ENCODE measurements at regions of chr5 and their contacts with region 1.

Region 1: GRCh38 chr5:163347671-163348070 is 89.7 kb upstream of the CCNG1 start:
- DNase-seq: peak; percentile 88
- H3K4me3 Mint-ChIP-seq: no peak overlapping the region
- H3K27ac Mint-ChIP-seq: no peak overlapping the region
- H3K4me1 Mint-ChIP-seq: no peaks in the 10 kb centered on the region
- H3K27me3 Mint-ChIP-seq: peaks cover 26% of the 10 kb centered on the region
- CTCF ChIP-seq: peak; percentile 92

Region 2: GRCh38 chr5:161851691-161852299 is 1495.9 kb before region 1 on chr5:
- CTCF ChIA-PET with region 1: interaction called, 62 read pairs
- POLR2A ChIA-PET with region 1: no interaction called
- intact Hi-C with region 1: loop called (anchors 1 kb)
- DNase-seq: peak; percentile 30
- H3K4me3 Mint-ChIP-seq: no peak overlapping the region
- H3K27ac Mint-ChIP-seq: no peak overlapping the region
- H3K4me1 Mint-ChIP-seq: no peaks in the 10 kb centered on the region
- H3K27me3 Mint-ChIP-seq: peaks cover 79% of the 10 kb centered on the region
- CTCF ChIP-seq: peak; percentile 45

Region 3: DNA sequence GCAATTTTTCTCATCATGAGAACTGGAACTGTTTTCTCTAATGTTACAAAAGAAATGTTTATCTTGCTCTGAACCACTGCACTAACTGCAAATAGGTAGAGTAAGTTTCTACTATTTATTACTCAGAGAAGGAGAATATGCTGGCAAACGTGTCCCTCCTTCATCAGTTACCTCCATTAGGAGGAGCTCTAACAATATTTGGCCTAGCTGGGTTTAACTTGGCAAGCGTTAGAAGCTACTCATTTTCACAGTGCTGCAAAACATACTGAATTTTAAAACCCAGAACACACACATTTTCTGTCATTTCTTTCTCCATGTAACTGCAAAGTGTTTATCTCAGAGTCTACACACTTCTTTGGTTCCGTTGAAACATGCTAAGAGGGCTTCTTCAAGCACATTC is 1381.1 kb before region 1 on chr5:
- CTCF ChIA-PET with region 1: interaction called, 13 read pairs
- POLR2A ChIA-PET with region 1: interaction called, 3 read pairs
- intact Hi-C with region 1: loop called (anchors 5 kb)
- DNase-seq: peak; percentile 60
- H3K4me3 Mint-ChIP-seq: no peak overlapping the region
- H3K27ac Mint-ChIP-seq: no peak overlapping the region
- H3K4me1 Mint-ChIP-seq: no peaks in the 10 kb centered on the region
- H3K27me3 Mint-ChIP-seq: peaks cover 76% of the 10 kb centered on the region
- CTCF ChIP-seq: peak; percentile 69

Region 4: GRCh38 chr5:162107591-162107990 is 1240.1 kb before region 1 on chr5:
- CTCF ChIA-PET with region 1: no interaction called
- POLR2A ChIA-PET with region 1: no interaction called
- intact Hi-C with region 1: no loop called
- DNase-seq: no peak
- H3K4me3 Mint-ChIP-seq: no peak overlapping the region
- H3K27ac Mint-ChIP-seq: no peak overlapping the region
- H3K4me1 Mint-ChIP-seq: no peaks in the 10 kb centered on the region
- H3K27me3 Mint-ChIP-seq: no peaks in the 10 kb centered on the region
- CTCF ChIP-seq: no peak

Region 5: DNA sequence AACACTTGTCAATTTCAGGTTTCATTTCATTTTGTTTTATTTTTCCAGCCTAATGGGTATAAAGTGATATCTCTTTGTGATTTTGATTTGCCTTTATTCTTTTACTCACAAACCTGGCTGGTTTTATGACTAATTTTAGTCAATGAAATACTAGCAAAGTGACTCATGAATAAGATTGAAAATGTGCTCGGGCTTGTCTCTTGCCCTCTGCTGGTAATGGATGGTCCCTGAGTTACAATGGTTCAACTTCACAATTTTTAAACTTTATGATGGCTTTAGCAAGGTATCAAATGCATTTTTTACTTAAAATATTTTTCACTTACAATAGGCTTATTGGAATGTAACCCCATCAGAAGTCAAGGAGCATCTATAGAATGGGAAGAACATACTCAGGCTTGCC is 341.7 kb before region 1 on chr5:
- CTCF ChIA-PET with region 1: interaction called, 17 read pairs
- POLR2A ChIA-PET with region 1: no interaction called
- intact Hi-C with region 1: no loop called
- DNase-seq: peak; percentile 63
- H3K4me3 Mint-ChIP-seq: no peak overlapping the region
- H3K27ac Mint-ChIP-seq: no peak overlapping the region
- H3K4me1 Mint-ChIP-seq: peaks cover 14% of the 10 kb centered on the region
- H3K27me3 Mint-ChIP-seq: no peaks in the 10 kb centered on the region
- CTCF ChIP-seq: peak; percentile 64

Region 6: GRCh38 chr5:163185315-163185714 is 162.4 kb before region 1 on chr5:
- CTCF ChIA-PET with region 1: no interaction called
- POLR2A ChIA-PET with region 1: no interaction called
- intact Hi-C with region 1: no loop called
- DNase-seq: no peak
- H3K4me3 Mint-ChIP-seq: no peak overlapping the region
- H3K27ac Mint-ChIP-seq: no peak overlapping the region
- H3K4me1 Mint-ChIP-seq: peaks cover 6% of the 10 kb centered on the region
- H3K27me3 Mint-ChIP-seq: peaks cover 14% of the 10 kb centered on the region
- CTCF ChIP-seq: no peak

Region 7: DNA sequence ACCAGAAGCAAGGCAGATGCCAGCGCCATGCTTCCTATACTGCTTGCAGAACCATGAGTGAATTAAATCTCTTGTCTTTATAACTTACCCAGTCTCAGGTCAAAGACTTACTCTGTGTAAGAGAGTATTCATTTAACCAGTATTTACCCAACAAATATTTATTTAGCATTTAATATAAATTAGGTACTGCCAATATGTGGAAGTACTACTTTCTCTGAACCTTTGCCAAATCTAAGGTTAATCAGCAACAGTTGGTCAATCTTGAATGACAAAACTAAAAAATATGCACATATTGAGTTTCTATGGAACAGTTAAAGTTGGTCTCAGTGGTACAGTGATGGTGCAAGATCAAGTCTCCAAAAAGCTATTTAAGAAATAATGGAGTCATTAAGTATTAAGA is 66.2 kb before region 1 on chr5:
- CTCF ChIA-PET with region 1: no interaction called
- POLR2A ChIA-PET with region 1: no interaction called
- intact Hi-C with region 1: no loop called
- DNase-seq: no peak
- H3K4me3 Mint-ChIP-seq: no peak overlapping the region
- H3K27ac Mint-ChIP-seq: no peak overlapping the region
- H3K4me1 Mint-ChIP-seq: no peaks in the 10 kb centered on the region
- H3K27me3 Mint-ChIP-seq: peaks cover 37% of the 10 kb centered on the region
- CTCF ChIP-seq: no peak

Region 8: DNA sequence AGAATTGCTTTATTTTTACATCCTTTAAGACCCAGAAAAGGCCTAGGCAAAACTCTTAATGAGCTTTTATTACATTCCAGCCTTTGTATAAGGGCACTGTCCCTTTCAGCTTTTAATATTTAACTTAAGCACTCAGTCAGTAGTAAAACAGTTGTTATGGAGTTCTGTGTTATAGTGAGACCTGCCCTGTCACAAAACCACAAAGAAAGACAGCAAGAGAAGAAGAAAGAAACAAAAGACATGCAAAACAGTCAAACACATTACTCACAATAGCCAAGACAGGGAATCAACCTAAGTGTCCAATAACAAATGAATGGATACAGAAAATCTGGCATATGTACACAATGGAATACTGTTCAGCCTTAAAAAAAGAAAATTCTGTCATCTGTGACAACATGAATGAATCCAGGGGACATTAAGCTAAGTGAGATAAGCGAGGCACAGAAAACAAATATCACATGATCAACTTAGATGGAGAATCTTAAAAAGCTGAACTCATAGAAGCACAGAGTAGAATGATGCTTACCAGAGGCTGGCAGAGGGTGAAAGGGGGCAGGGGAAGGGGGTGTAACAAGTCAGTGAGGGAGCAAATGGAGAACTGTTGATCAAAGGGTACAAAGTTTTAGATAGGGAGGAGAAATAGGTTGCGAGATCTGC is 25.9 kb after region 1 on chr5:
- CTCF ChIA-PET with region 1: interaction called, 13 read pairs
- POLR2A ChIA-PET with region 1: no interaction called
- intact Hi-C with region 1: no loop called
- DNase-seq: no peak
- H3K4me3 Mint-ChIP-seq: no peak overlapping the region
- H3K27ac Mint-ChIP-seq: no peak overlapping the region
- H3K4me1 Mint-ChIP-seq: no peaks in the 10 kb centered on the region
- H3K27me3 Mint-ChIP-seq: no peaks in the 10 kb centered on the region
- CTCF ChIP-seq: no peak

Region 9: GRCh38 chr5:163459922-163460766 is 112.5 kb after region 1 on chr5 and contains the starts of genes HMMR and NUDCD2:
- CTCF ChIA-PET with region 1: no interaction called
- POLR2A ChIA-PET with region 1: no interaction called
- intact Hi-C with region 1: no loop called
- DNase-seq: peak; percentile 100
- H3K4me3 Mint-ChIP-seq: peak within 1 kb of the TSS; percentile 83
- H3K27ac Mint-ChIP-seq: peak within 1 kb of the TSS; percentile 99
- H3K4me1 Mint-ChIP-seq: peaks cover 48% of the 10 kb centered on the region
- H3K27me3 Mint-ChIP-seq: no peaks in the 10 kb centered on the region
- CTCF ChIP-seq: peak; percentile 13
- total RNA-seq, gene HMMR: 29.3 and 43.5 TPM in 2 replicates
- total RNA-seq, gene NUDCD2: 57.8 and 68.0 TPM in 2 replicates